Activated CD8-positive, alpha-beta memory T cell treated with anti-CD3 and anti-CD28 coated beads, Interleukin-2, amount 10 ng/mL, durations not matched to agents 7 days and 5 days (primary cell): ENCODE measurements at regions of chr14 and their contacts with region 1.

Region 1: DNA sequence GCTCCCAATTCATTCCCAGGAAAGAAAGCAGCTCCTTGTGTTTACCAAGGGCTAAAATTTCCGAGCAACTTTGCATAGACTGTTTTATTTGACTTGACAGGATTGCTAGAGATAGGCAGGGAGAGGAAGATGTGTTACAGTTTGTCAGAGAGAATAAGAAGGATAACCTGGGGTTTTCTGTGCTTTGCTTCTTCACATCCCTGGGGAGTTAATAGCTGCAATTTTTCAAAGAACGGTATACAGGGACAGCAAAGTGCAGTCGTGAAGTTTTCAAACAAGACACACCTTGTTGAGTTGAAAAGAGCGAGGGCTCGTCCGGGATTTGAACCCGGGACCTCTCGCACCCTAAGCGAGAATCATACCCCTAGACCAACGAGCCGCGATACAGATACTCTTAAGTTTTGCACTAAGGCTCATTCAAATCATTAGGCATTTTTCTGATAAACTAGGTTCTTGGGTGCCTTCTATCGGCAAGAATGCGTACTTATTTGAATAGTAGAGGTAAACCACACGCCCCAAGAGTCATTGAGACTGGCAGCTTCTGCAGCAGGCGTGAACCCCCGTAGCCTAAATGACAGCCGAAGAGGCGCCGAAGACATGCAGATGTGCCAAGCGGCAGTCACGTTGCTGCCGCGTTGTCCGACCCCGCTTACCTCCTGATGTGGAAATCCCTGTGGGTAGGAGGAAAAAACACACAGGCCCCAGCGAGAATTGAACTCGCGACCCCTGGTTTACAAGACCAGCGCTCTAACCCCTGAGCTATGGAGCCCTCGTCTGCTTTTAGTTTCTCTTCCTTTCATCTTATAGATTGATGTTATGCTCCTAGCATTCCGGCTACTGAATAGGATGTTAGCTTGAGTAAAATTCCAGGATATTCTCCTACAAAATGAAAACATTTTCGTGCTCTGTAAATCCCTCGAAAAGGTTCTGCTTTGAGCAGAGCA is 22.2 kb upstream of the RNASE12 start:
- DNase-seq: peak; percentile 91
- ATAC-seq: peak; percentile 80
- H3K4me3 Mint-ChIP-seq: no peak overlapping the region
- H3K27ac Mint-ChIP-seq: no peak overlapping the region
- H3K4me1 Mint-ChIP-seq: peaks cover 24% of the 10 kb centered on the region
- H3K27me3 Mint-ChIP-seq: no peaks in the 10 kb centered on the region

Region 2: GRCh38 chr14:20327005-20327869 is 286.1 kb before region 1 on chr14:
- CTCF ChIA-PET with region 1: interaction called, 89 read pairs
- DNase-seq: no peak
- ATAC-seq: peak; percentile 45
- H3K4me3 Mint-ChIP-seq: peak overlapping the region; percentile 1
- H3K27ac Mint-ChIP-seq: peak overlapping the region; percentile 33
- H3K4me1 Mint-ChIP-seq: peaks cover 48% of the 10 kb centered on the region
- H3K27me3 Mint-ChIP-seq: no peaks in the 10 kb centered on the region

Region 3: GRCh38 chr14:20343092-20343861 is 270.1 kb before region 1 on chr14 and contains the start of gene PARP2:
- CTCF ChIA-PET with region 1: interaction called, 12 read pairs
- DNase-seq: peak; percentile 98
- ATAC-seq: peak; percentile 93
- H3K4me3 Mint-ChIP-seq: peak within 1 kb of the TSS; percentile 83
- H3K27ac Mint-ChIP-seq: peak within 1 kb of the TSS; percentile 86
- H3K4me1 Mint-ChIP-seq: peaks cover 18% of the 10 kb centered on the region
- H3K27me3 Mint-ChIP-seq: no peaks in the 10 kb centered on the region
- total RNA-seq, gene PARP2: 32.6 to 38.4 TPM

Region 4: GRCh38 chr14:20530771-20531571 is 82.4 kb before region 1 on chr14:
- CTCF ChIA-PET with region 1: interaction called, 11 read pairs
- DNase-seq: peak; percentile 81
- ATAC-seq: peak; percentile 79
- H3K4me3 Mint-ChIP-seq: peak overlapping the region; percentile 54
- H3K27ac Mint-ChIP-seq: no peak overlapping the region
- H3K4me1 Mint-ChIP-seq: peaks cover 8% of the 10 kb centered on the region
- H3K27me3 Mint-ChIP-seq: peaks cover 41% of the 10 kb centered on the region

Region 5: DNA sequence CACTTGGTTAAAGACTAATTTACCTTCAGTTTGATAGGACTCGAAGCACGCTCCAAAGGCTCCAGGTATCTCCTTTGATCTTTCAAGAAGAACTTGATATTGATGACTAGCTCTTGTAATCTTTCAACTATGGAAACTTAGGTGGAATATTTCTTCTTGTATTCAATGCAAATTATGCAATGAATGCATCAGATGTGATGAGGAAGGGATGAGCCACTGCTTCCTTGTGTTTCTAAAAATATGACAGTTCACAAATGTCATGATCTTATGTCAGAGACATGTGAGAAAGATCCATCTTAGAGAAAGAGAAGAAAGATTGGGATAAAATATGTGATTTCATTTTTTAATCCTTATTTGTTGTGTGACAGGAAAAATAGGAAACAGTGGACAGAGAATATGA is 62.4 kb before region 1 on chr14:
- CTCF ChIA-PET with region 1: no interaction called
- DNase-seq: no peak
- ATAC-seq: no peak
- H3K4me3 Mint-ChIP-seq: no peak overlapping the region
- H3K27ac Mint-ChIP-seq: no peak overlapping the region
- H3K4me1 Mint-ChIP-seq: no peaks in the 10 kb centered on the region
- H3K27me3 Mint-ChIP-seq: peaks cover 5% of the 10 kb centered on the region

Region 6: DNA sequence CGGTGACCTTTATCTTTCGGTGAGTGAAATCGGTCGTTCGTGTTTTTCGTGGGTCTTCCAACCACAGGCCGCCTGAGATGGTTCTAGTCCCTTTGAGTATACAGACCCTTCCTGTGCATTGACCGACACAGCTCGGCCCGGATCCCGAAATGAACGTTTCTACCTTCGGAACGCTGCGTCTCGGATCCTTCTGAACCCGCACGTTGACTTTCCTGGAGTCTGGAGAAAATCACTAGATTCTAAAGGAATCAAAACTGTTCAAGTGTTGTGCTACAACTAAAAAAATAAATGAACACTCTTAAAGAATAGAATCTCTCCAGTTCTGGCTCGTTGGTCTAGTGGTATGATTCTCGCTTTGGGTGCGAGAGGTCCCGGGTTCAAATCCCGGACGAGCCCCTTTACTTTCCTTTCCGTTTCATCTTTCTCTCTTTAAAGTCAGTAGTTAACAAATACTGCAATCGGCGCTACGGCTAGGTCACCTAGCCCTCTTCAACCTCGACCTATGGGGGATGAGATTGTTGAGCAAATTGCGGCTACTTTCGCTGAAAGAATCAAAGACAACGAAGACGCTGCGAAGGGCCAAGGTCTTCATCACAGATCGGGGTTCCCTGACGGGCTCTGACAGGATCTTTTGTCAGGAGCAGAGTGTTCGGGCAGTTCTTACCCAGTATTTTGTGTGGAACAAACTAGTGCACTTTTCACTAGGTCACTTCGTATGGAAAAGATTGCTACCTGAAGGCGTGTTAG is 19.5 kb after region 1 on chr14:
- CTCF ChIA-PET with region 1: interaction called, 28 read pairs
- DNase-seq: peak; percentile 84
- ATAC-seq: peak; percentile 84
- H3K4me3 Mint-ChIP-seq: peak overlapping the region; percentile 73
- H3K27ac Mint-ChIP-seq: peak overlapping the region; percentile 81
- H3K4me1 Mint-ChIP-seq: peaks cover 39% of the 10 kb centered on the region
- H3K27me3 Mint-ChIP-seq: peaks cover 79% of the 10 kb centered on the region

Region 7: GRCh38 chr14:20690848-20691523 is 77.6 kb after region 1 on chr14:
- CTCF ChIA-PET with region 1: interaction called, 49 read pairs
- DNase-seq: peak; percentile 57
- ATAC-seq: peak; percentile 81
- H3K4me3 Mint-ChIP-seq: no peak overlapping the region
- H3K27ac Mint-ChIP-seq: peak overlapping the region; percentile 69
- H3K4me1 Mint-ChIP-seq: peaks cover 33% of the 10 kb centered on the region
- H3K27me3 Mint-ChIP-seq: no peaks in the 10 kb centered on the region

Region 8: DNA sequence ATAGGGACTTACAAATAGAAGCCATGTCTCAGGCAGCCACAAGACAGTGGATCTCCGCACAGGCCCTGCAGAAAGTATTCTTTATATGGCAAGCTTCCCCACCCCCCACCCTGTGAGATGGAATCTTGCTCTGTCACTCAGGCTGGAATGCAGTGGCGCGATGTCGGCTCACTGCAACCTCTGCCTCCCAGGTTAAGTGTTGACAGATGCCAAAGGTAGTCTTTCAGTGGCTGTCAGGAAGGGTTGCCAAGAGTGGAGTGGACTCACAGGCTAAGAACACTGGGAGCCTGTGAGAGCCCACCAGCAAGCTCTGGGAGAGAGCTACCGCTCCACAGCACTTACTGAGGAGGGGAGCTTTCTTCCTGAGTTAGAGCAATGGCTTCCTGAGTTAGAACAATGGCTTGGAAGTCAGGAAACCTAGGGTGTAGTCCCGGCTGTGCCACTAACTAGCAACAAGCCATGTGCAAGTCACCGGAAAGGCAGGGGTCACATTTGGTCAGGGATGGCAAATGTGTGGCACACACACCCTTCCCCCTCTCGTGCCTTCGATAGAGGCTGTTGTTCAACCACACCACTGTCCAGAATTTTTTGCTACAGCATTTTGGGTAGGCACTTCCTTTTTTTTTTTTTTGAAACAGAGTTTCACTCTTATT is 186.7 kb after region 1 on chr14:
- CTCF ChIA-PET with region 1: no interaction called
- DNase-seq: no peak
- ATAC-seq: no peak
- H3K4me3 Mint-ChIP-seq: no peak overlapping the region
- H3K27ac Mint-ChIP-seq: no peak overlapping the region
- H3K4me1 Mint-ChIP-seq: peaks cover 11% of the 10 kb centered on the region
- H3K27me3 Mint-ChIP-seq: peaks cover 17% of the 10 kb centered on the region